Calu3 (cell line): ENCODE measurements at regions of chr3 and their contacts with region 1.

Region 1: DNA sequence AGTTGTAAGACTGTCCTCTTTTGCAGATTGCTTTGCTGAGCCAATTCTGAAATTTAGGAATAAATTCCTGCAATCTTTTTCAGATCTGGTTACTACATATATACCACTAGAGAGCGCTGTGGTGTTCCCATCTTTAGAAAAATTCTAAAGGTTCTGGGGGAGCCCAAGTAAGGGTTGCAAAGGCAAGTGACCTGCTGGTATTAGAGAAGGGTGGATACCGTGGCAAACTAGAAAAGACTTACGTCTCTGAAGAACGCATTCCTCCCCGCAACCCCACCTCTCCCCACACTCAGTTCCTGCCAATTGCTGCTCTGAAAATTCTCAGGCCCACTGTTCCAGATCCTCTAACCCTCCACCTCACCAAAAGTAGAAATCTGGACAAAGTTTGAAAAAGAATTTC is 48.5 kb downstream of the EFHB start:
- DNase-seq: peak; percentile 5
- H3K4me3 Mint-ChIP-seq: no peak overlapping the region
- H3K27ac Mint-ChIP-seq: no peak overlapping the region
- H3K4me1 Mint-ChIP-seq: peaks cover 22% of the 10 kb centered on the region
- H3K27me3 Mint-ChIP-seq: no peaks in the 10 kb centered on the region
- CTCF ChIP-seq: peak; percentile 37

Region 2: DNA sequence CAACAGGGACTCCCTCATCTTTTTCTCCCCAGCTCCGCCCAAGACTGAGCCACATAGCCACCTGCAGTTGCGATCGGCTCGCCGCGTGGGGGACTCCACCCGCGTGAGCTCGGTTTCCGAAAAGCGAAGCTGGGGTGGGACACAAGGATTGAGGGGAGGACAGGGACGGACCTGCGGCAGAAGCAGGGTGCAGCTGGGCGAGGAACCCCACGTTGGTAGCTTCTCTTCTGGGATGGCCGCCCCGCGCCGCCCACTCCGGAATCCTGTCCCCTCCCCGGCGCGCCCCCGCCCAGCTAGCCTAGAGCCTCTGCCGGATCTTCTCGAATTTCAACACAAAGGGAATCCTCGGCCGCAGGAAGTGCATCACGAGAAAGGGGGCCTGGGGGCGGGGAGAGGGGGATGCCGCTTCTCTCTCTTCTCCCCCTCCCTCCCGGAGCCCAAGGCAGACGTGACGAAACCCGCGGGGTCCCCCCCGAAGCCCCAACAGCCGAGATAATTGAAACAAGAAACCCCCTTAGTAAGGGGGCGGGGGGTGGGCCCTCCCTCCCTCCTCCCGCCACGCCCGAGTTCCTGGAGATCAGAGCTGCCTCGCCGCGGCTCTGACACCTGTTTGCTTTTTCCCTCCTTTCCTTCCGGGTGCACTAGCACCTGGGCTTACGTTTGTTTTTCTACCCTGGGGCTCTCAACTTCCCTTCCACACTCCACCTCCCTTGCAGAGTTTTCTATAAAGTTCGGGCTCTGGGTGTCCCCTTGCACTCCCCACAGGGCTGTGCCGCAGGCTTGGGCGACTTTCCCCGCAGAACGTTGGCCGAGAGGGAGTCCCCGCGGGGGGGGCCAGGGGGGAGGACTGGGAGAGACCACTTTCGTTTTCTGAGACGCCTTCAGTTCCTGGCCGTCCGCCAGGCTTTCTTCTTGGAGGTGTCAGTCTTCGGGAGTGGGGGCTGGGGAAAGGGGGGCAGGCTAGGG is 738.5 kb before region 1 on chr3:
- CTCF ChIA-PET with region 1: no interaction called
- intact Hi-C with region 1: loop called (anchors 10 kb)
- DNase-seq: peak; percentile 77
- H3K4me3 Mint-ChIP-seq: peak overlapping the region; percentile 89
- H3K27ac Mint-ChIP-seq: peak overlapping the region; percentile 78
- H3K4me1 Mint-ChIP-seq: peaks cover 12% of the 10 kb centered on the region
- H3K27me3 Mint-ChIP-seq: peaks cover 26% of the 10 kb centered on the region
- CTCF ChIP-seq: peak; percentile 40

Region 3: DNA sequence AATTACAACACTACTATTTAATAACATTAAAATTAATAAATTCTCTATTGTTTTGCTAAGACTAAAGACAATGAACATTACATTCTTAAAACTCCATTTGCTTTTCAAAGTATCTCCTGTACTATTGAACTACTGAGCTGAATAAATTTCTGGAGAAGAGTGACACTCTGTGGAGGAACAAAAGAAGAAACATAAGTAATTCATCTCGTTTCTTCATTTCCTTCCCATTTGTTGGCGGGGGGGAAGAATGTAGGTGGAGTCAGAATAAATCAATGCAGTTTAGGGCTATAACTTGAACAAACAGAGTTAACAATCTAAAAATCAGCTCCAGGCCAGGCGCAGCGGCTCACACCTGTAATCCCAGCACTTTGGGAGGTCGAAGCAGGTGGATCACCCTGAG is 15.9 kb after region 1 on chr3:
- CTCF ChIA-PET with region 1: interaction called, 4 read pairs
- intact Hi-C with region 1: loop called (anchors 1 kb)
- DNase-seq: peak; percentile 37
- H3K4me3 Mint-ChIP-seq: peak overlapping the region; percentile 11
- H3K27ac Mint-ChIP-seq: peak overlapping the region; percentile 38
- H3K4me1 Mint-ChIP-seq: peaks cover 14% of the 10 kb centered on the region
- H3K27me3 Mint-ChIP-seq: no peaks in the 10 kb centered on the region
- CTCF ChIP-seq: no peak

Region 4: DNA sequence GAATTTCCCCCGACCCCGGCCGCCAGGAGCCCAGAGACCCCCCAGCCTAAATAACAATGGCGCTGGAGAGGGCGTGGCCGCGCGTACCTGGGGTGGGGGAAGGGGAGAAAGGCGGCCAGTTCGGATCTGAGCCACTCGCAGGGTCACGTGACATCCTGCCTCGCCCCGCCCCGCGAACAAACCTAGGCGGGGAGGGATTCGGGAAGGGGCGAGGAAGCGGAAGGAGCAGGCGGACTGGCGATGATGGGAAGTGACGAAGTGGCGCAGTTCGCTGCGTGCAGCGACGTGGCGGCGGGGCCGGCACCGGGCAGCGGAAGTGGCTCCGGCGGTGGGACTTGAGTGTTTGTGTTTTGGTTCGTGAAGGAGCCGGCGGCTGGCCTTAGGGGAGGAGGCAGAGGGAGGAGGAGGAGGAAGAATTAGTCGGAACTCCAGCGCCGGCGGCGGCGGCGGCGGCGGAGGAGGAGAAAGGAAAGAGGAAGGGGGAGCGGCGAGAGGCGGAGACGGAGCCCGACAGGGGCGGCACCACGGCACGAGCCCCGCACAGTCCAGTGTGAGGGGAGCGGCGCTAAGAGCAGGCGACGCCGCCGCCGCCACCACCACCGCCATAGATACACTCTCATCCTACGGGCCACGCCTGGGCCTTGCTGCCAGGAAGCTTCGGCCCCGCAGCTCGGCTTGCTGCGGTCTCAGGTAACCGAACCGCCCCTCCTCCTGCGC is 61.5 kb after region 1 on chr3 and contains the start of gene RAB5A:
- CTCF ChIA-PET with region 1: interaction called, 3 read pairs
- intact Hi-C with region 1: loop called (anchors 2 kb)
- DNase-seq: peak; percentile 98
- H3K4me3 Mint-ChIP-seq: peak within 1 kb of the TSS; percentile 77
- H3K27ac Mint-ChIP-seq: peak within 1 kb of the TSS; percentile 72
- H3K4me1 Mint-ChIP-seq: peaks cover 20% of the 10 kb centered on the region
- H3K27me3 Mint-ChIP-seq: no peaks in the 10 kb centered on the region
- CTCF ChIP-seq: no peak
- total RNA-seq, gene RAB5A: 66.7 and 75.4 TPM in 2 replicates

Region 5: DNA sequence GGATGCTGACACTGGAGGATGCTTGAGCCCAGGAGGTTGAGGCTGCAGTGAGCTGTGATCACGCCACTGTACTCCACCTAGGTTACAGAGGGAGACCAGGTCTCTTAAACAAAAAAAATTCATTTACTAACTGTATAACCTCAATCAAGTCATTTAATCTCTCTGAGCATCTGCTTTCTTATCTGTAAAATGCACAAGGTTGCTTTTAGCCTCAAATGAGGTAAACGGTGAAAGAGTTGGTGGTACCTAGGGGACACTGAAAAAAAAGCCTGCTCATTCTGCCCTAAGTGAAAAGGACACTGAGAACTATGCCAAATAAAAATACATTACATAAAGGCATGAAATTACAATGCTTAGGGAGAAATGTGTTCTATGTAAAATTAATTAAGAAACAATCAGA is 123.2 kb after region 1 on chr3:
- CTCF ChIA-PET with region 1: no interaction called
- intact Hi-C with region 1: no loop called
- DNase-seq: no peak
- H3K4me3 Mint-ChIP-seq: no peak overlapping the region
- H3K27ac Mint-ChIP-seq: no peak overlapping the region
- H3K4me1 Mint-ChIP-seq: no peaks in the 10 kb centered on the region
- H3K27me3 Mint-ChIP-seq: no peaks in the 10 kb centered on the region
- CTCF ChIP-seq: no peak

Region 6: DNA sequence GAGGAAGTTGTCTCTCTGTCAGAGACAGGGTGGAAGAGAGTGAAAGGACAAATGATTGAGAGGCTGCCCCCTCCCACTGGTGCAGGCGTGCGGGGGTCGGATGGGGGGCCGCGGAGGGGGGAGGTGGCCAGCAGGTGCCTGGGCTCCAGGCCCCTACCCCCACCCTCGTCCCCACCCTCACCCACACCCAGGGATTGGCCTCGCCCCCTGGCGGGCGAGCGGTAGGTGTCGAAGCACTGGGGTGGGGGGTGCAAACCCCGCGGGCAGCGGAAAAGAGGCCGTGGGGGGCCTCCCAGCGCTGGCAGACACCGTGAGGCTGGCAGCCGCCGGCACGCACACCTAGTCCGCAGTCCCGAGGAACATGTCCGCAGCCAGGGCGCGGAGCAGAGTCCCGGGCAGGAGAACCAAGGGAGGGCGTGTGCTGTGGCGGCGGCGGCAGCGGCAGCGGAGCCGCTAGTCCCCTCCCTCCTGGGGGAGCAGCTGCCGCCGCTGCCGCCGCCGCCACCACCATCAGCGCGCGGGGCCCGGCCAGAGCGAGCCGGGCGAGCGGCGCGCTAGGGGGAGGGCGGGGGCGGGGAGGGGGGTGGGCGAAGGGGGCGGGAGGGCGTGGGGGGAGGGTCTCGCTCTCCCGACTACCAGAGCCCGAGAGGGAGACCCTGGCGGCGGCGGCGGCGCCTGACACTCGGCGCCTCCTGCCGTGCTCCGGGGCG is 154.5 kb after region 1 on chr3 and contains the start of gene KAT2B:
- CTCF ChIA-PET with region 1: no interaction called
- intact Hi-C with region 1: loop called (anchors 5 kb)
- DNase-seq: peak; percentile 82
- H3K4me3 Mint-ChIP-seq: peak within 1 kb of the TSS; percentile 84
- H3K27ac Mint-ChIP-seq: peak within 1 kb of the TSS; percentile 89
- H3K4me1 Mint-ChIP-seq: peaks cover 38% of the 10 kb centered on the region
- H3K27me3 Mint-ChIP-seq: no peaks in the 10 kb centered on the region
- CTCF ChIP-seq: peak; percentile 83
- total RNA-seq, gene KAT2B: 12.0 and 13.8 TPM in 2 replicates

Region 7: DNA sequence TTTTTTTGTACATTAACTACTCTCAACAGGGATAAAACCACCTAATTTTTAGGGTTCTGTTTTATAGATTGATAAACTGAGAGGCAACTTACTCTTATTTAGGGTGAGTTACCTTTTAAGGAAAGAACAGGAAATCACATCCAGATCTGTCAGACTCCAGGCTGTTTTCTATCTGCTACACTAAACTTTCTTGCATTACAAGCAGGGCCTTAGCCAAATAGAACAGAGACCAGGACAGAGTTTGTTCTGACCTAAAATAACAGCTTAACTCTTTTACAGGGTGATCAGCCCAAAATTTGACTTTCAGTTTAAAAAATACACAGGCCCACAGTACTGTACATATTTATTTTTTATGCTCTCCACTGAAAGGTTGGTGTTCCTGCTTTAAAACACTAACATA is 261.9 kb after region 1 on chr3:
- CTCF ChIA-PET with region 1: no interaction called
- intact Hi-C with region 1: no loop called
- DNase-seq: no peak
- H3K4me3 Mint-ChIP-seq: no peak overlapping the region
- H3K27ac Mint-ChIP-seq: no peak overlapping the region
- H3K4me1 Mint-ChIP-seq: no peaks in the 10 kb centered on the region
- H3K27me3 Mint-ChIP-seq: no peaks in the 10 kb centered on the region
- CTCF ChIP-seq: no peak

Region 8: GRCh38 chr3:20185701-20186598 is 300.5 kb after region 1 on chr3 and contains the start of gene SGO1:
- CTCF ChIA-PET with region 1: interaction called, 3 read pairs
- intact Hi-C with region 1: loop called (anchors 5 kb)
- DNase-seq: peak; percentile 98
- H3K4me3 Mint-ChIP-seq: no peak within 1 kb of the TSS
- H3K27ac Mint-ChIP-seq: no peak within 1 kb of the TSS
- H3K4me1 Mint-ChIP-seq: no peaks in the 10 kb centered on the region
- H3K27me3 Mint-ChIP-seq: no peaks in the 10 kb centered on the region
- CTCF ChIP-seq: no peak
- total RNA-seq, gene SGO1: 29.4 and 30.2 TPM in 2 replicates